ENCODE measurements at regions of chr14 and their contacts with region 1.

Region 1: GRCh38 chr14:55942076-55942654 is 176.0 kb upstream of the PELI2 start:
- DNase-seq: no peak
- ATAC-seq: no peak
- H3K4me3 ChIP-seq: no peak overlapping the region
- H3K4me3 Mint-ChIP-seq: no peak overlapping the region
- H3K27ac ChIP-seq: no peak overlapping the region
- H3K27ac Mint-ChIP-seq: no peak overlapping the region
- H3K4me1 ChIP-seq: no peaks in the 10 kb centered on the region
- H3K4me1 Mint-ChIP-seq: no peaks in the 10 kb centered on the region
- H3K27me3 ChIP-seq: no peaks in the 10 kb centered on the region
- H3K27me3 Mint-ChIP-seq: peaks cover 8% of the 10 kb centered on the region
- CTCF ChIP-seq: no peak

Region 2: GRCh38 chr14:55976219-55976618 is 34.1 kb after region 1 on chr14:
- CTCF ChIA-PET with region 1: no interaction called
- POLR2A ChIA-PET with region 1: no interaction called
- intact Hi-C with region 1: no loop called
- DNase-seq: no peak
- ATAC-seq: no peak
- H3K4me3 ChIP-seq: no peak overlapping the region
- H3K4me3 Mint-ChIP-seq: no peak overlapping the region
- H3K27ac ChIP-seq: no peak overlapping the region
- H3K27ac Mint-ChIP-seq: no peak overlapping the region
- H3K4me1 ChIP-seq: no peaks in the 10 kb centered on the region
- H3K4me1 Mint-ChIP-seq: no peaks in the 10 kb centered on the region
- H3K27me3 ChIP-seq: no peaks in the 10 kb centered on the region
- H3K27me3 Mint-ChIP-seq: peaks cover under 1% of the 10 kb centered on the region
- CTCF ChIP-seq: no peak

Region 3: DNA sequence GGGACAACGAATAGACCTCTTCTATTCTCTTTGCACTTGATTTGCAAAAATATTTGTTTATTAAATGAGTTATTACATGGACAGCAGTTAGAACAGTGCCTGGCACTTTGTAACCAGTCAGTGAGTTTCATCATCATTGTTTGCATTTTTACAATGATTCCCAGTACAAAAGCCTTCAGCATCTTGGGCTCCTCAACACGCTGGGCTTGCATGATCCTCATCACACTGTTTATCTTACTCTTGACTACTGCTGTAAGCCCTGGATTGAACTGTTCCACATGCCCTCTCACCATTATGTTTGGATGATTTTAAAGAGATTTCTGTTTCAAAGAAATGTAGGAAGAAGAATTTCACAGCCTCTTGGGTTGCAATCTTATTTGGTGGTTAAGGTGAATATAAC is 380.4 kb after region 1 on chr14:
- CTCF ChIA-PET with region 1: no interaction called
- POLR2A ChIA-PET with region 1: interaction called, 15 read pairs
- intact Hi-C with region 1: no loop called
- DNase-seq: no peak
- ATAC-seq: no peak
- H3K4me3 ChIP-seq: no peak overlapping the region
- H3K4me3 Mint-ChIP-seq: no peak overlapping the region
- H3K27ac ChIP-seq: no peak overlapping the region
- H3K27ac Mint-ChIP-seq: no peak overlapping the region
- H3K4me1 ChIP-seq: no peaks in the 10 kb centered on the region
- H3K4me1 Mint-ChIP-seq: no peaks in the 10 kb centered on the region
- H3K27me3 ChIP-seq: no peaks in the 10 kb centered on the region
- H3K27me3 Mint-ChIP-seq: no peaks in the 10 kb centered on the region
- CTCF ChIP-seq: no peak

Measured in B cell (primary cell).